Activated T-helper 1 cell treated with anti-CD3 and anti-CD28 coated beads, Interleukin-12 subunit alpha, Interleukin-12 subunit beta, Interleukin-2, Interleukin-4 antibody, amounts not matched to agents 30 ng/mL and 10 ng/mL and 1 ng/mL, durations not matched to agents 14 hours and 24 hours and 36 hours (primary cell): ENCODE measurements at regions of chr4 and their contacts with region 1.

Region 1: GRCh38 chr4:183261953-183262775 is 57.9 kb downstream of the CLDN22 start:
- DNase-seq: peak; percentile 56
- H3K4me3 Mint-ChIP-seq: no peak overlapping the region
- H3K27ac Mint-ChIP-seq: no peak overlapping the region
- H3K4me1 Mint-ChIP-seq: peaks cover 7% of the 10 kb centered on the region
- H3K27me3 Mint-ChIP-seq: peaks cover 5% of the 10 kb centered on the region

Region 2: GRCh38 chr4:182478475-182478874 is 783.7 kb before region 1 on chr4:
- intact Hi-C with region 1: loop called (anchors 1 kb)
- DNase-seq: no peak
- H3K4me3 Mint-ChIP-seq: no peak overlapping the region
- H3K27ac Mint-ChIP-seq: no peak overlapping the region
- H3K4me1 Mint-ChIP-seq: no peaks in the 10 kb centered on the region
- H3K27me3 Mint-ChIP-seq: no peaks in the 10 kb centered on the region

Region 3: GRCh38 chr4:182938205-182938645 is 323.9 kb before region 1 on chr4:
- intact Hi-C with region 1: loop called (anchors 1 kb)
- DNase-seq: peak; percentile 31
- H3K4me3 Mint-ChIP-seq: no peak overlapping the region
- H3K27ac Mint-ChIP-seq: no peak overlapping the region
- H3K4me1 Mint-ChIP-seq: no peaks in the 10 kb centered on the region
- H3K27me3 Mint-ChIP-seq: peaks cover 14% of the 10 kb centered on the region

Region 4: GRCh38 chr4:183074296-183074990 is 187.7 kb before region 1 on chr4:
- intact Hi-C with region 1: loop called (anchors 1 kb)
- DNase-seq: no peak
- H3K4me3 Mint-ChIP-seq: no peak overlapping the region
- H3K27ac Mint-ChIP-seq: no peak overlapping the region
- H3K4me1 Mint-ChIP-seq: no peaks in the 10 kb centered on the region
- H3K27me3 Mint-ChIP-seq: peaks cover 8% of the 10 kb centered on the region

Region 5: DNA sequence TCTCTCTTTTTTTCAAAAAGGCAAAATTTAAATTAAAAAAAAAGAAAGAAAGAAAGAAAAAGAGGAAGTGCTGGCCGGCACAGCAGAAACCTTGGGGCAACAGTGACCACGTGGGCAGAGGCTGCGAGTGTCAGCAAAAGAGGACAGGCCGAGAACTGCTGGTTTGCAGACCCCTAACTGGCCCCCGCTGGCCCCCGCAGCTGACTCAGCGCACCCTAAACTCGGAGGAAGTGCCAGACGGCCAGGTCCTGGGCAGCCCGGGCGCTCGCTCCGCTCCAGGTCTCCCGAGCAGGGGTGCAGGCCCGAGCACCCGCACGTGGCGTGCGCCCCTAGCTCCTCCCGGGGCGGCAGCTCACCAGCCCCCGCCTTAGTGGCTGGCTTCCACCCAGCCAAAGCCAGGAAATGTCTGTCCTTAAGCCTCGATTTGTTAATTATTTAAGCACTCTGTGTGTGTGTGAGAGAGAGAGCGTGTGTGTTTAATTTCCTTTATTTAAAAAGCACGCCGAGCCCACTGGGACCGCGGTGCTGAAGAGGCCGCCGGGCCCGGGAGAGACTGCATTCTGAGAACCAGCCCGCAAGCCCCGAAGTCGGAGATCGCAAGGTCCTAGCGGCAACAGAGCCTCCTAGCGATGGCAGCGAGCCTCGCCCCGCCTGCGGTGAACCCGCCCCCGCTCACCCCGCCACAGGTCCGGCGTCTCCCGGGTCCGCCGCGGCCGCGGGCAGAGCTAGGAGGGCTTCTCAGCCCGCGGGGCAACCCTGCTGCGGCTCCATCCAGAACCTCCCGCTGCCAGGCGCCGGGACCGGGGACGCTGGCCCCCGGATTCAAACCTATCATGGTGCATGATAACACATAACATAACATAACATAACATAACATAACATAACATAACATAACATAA is 136.3 kb after region 1 on chr4:
- intact Hi-C with region 1: loop called (anchors 2 kb)
- DNase-seq: peak; percentile 46
- H3K4me3 Mint-ChIP-seq: peak overlapping the region; percentile 85
- H3K27ac Mint-ChIP-seq: peak overlapping the region; percentile 79
- H3K4me1 Mint-ChIP-seq: peaks cover 20% of the 10 kb centered on the region
- H3K27me3 Mint-ChIP-seq: peaks cover 36% of the 10 kb centered on the region

Region 6: GRCh38 chr4:183471946-183472708 is 210.0 kb after region 1 on chr4:
- intact Hi-C with region 1: no loop called
- DNase-seq: peak; percentile 56
- H3K4me3 Mint-ChIP-seq: no peak overlapping the region
- H3K27ac Mint-ChIP-seq: no peak overlapping the region
- H3K4me1 Mint-ChIP-seq: peaks cover 6% of the 10 kb centered on the region
- H3K27me3 Mint-ChIP-seq: peaks cover 5% of the 10 kb centered on the region